AG04450 (cell line): ENCODE measurements at regions of chr15 and their contacts with region 1.

Region 1: DNA sequence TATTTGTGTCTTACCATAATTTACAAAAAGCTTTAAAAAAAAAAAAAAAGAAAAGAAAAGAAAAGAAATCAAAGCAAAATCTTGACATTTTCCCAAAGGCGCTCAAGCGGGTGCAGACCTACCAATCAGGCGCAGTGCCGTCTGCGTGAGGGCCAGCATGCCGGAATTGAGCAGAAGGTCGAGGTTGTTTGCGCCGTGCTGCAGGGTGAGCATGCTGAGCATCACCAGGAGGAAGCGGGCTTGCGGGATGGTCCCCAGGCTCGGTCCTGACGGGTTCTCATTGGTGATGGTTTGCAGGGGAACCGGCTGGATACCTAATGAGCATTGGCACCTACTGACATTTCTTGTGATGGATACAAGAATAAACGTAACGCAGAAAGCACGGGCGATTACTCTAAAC is 93.9 kb downstream of the HERC2 start:
- DNase-seq: no peak
- H3K4me3 ChIP-seq: no peak overlapping the region
- H3K27ac ChIP-seq: no peak overlapping the region
- H3K27me3 ChIP-seq: no peaks in the 10 kb centered on the region
- CTCF ChIP-seq: no peak

Region 2: GRCh38 chr15:28167042-28167441 is 61.1 kb before region 1 on chr15:
- CTCF ChIA-PET with region 1: interaction called, 12 read pairs
- POLR2A ChIA-PET with region 1: no interaction called
- DNase-seq: no peak
- H3K4me3 ChIP-seq: no peak overlapping the region
- H3K27ac ChIP-seq: no peak overlapping the region
- H3K27me3 ChIP-seq: no peaks in the 10 kb centered on the region
- CTCF ChIP-seq: no peak

Region 3: DNA sequence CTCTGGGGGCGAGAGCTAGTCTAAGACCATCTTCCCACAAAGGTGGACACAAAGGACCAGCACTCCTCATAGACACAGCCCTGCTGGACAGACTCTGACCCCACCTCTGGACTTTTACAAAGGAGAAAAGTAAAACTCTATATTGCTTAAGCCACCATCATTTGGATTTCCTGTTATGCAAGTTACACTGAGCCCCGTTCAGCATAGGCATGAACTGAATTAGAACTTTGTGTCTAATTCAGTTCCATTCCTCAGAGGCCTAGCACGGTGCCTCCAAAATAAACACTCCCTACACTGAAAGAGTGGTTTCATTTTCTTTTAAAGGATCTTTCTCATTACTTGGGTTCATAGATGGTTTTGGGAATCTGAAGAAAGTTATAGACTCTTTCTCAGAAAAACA is 49.8 kb before region 1 on chr15:
- CTCF ChIA-PET with region 1: no interaction called
- POLR2A ChIA-PET with region 1: no interaction called
- DNase-seq: no peak
- H3K4me3 ChIP-seq: no peak overlapping the region
- H3K27ac ChIP-seq: no peak overlapping the region
- H3K27me3 ChIP-seq: no peaks in the 10 kb centered on the region
- CTCF ChIP-seq: no peak

Region 4: DNA sequence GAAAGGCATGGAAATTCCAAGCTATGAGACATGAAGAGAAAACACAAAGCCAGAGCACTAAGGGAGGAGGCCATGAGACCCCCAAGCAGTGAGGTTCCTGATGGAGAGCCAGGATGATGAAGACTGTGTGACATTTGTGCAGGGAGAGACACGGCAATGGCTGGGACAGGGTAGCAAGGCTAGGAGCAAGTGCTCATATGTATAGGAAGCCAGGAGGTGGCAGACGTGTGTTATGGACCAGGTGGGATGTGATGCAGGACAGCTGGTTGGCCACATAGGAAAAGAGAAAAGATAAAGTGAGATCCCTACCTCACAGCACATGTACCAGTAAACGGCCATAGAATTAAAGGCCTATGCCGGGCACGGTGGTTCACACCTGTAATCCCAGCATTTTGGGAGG is 770.4 kb after region 1 on chr15:
- CTCF ChIA-PET with region 1: interaction called, 11 read pairs
- POLR2A ChIA-PET with region 1: no interaction called
- DNase-seq: no peak
- H3K4me3 ChIP-seq: no peak overlapping the region
- H3K27ac ChIP-seq: no peak overlapping the region
- H3K27me3 ChIP-seq: no peaks in the 10 kb centered on the region
- CTCF ChIP-seq: no peak